PC-3 (cell line): ENCODE measurements at regions of chr5 and their contacts with region 1.

Region 1: DNA sequence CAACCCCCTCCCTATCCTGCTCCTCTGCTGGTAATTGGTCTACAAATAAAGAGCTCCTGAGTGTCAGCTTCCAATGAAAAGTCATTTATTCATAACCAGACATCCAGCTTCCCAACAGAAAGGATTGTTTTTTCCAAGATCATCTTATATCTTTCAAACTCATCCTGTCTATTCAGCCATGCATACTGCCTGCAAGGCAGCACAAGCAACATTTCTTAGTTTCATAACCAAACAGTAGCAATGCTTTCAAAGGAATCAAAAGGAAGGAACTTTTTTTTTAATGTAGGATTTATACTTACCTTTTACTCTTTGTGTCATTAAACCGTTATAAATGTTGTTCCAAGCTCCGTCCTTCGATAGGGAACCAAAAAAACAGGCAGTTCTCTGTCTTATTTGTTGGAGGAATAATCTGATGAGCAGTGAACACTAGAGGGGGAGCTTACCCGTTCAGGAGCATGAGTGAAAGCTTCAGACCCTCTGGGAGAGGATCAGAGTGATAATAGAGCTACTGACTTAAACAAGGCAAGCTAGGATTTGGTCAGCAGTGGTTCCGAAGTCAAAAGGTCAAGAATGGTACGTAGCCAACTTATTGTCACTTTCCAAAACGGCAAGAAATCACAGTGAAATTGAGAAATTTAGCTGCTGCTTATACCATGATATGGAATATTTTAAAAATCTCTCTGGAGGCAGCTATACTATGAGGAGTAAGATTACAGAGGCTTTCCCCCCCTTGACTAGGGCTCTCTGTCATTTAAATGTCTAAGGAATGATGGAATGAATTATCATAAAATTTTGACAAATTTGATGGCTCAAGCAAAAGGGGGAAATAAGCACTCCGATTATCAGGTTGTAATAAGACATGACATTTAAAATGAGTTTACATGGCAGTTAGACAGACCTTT is 892.9 kb downstream of the NR2F1-AS1 start:
- DNase-seq: peak; percentile 43
- ATAC-seq: peak; percentile 74
- H3K4me3 ChIP-seq: no peak overlapping the region
- H3K27ac ChIP-seq: no peak overlapping the region
- H3K4me1 ChIP-seq: no peaks in the 10 kb centered on the region; the same call in 1 of the 2 replicates
- H3K27me3 ChIP-seq: no peaks in the 10 kb centered on the region
- CTCF ChIP-seq: peak; percentile 62

Region 2: GRCh38 chr5:92711956-92712355 is 23.9 kb after region 1 on chr5:
- CTCF ChIA-PET with region 1: no interaction called
- POLR2A ChIA-PET with region 1: interaction called, 11 read pairs
- intact Hi-C with region 1: no loop called
- DNase-seq: no peak
- ATAC-seq: no peak
- H3K4me3 ChIP-seq: no peak overlapping the region
- H3K27ac ChIP-seq: no peak overlapping the region
- H3K4me1 ChIP-seq: no peaks in the 10 kb centered on the region
- H3K27me3 ChIP-seq: no peaks in the 10 kb centered on the region
- CTCF ChIP-seq: no peak